ENCODE measurements at regions of chr9 and their contacts with region 1.

Region 1: DNA sequence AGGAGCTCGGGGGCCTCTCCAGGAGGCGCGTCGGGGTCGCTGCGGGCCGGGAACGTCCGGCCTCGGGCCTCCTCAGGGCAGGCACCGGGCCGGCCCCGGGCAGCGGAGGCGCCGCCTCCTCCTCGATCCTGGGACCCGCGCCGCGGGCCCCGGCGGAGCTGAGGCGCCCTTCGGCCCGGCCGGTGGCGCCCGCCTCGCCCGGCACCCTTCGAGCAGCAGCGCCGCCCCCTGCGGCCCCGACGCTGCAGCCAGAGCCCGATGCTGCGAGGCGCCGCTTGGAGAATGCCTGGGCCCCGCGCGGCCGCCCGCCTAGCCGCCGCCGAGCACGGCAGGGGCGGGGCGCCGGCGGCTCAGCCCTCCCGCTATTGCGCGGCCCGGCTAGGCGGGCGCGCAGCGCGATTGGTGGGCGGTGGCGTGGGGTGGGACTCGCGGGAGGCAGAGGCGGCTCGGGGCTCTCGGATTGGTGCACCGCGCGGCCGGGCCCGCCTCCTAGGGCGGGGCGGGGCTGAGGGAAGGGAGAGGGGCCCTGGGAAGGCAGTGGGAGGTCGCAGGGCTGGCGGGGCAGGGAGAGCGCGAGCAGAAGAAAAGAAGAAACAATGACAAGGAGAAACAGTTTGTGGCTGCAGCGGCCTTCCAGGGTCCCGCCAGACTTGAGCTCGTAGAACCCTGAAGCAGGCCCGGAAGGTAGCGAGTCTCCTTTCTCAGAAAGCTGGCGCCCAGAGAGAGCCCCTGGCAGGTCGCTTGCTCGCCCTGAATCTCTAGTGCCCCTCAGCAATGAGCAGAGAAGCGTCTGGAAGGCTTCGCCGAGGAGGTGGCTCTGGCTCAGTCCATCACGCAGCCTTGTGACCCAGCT is at the start of gene EEIG1:
- DNase-seq: peak; percentile 97
- ATAC-seq: peak; percentile 93
- H3K4me3 Mint-ChIP-seq: peak within 1 kb of the TSS; percentile 97
- H3K27ac Mint-ChIP-seq: peak within 1 kb of the TSS; percentile 92
- H3K4me1 Mint-ChIP-seq: peaks cover 45% of the 10 kb centered on the region
- H3K27me3 Mint-ChIP-seq: no peaks in the 10 kb centered on the region
- total RNA-seq, gene EEIG1: 227 to 232 TPM

Region 2: GRCh38 chr9:127955294-127956035 is 25.5 kb before region 1 on chr9:
- CTCF ChIA-PET with region 1: interaction called, 75 read pairs
- POLR2A ChIA-PET with region 1: interaction called, 6 read pairs
- DNase-seq: peak; percentile 83
- ATAC-seq: peak; percentile 96
- H3K4me3 Mint-ChIP-seq: peak overlapping the region; percentile 21
- H3K27ac Mint-ChIP-seq: peak overlapping the region; percentile 70
- H3K4me1 Mint-ChIP-seq: peaks cover 89% of the 10 kb centered on the region
- H3K27me3 Mint-ChIP-seq: no peaks in the 10 kb centered on the region

Region 3: DNA sequence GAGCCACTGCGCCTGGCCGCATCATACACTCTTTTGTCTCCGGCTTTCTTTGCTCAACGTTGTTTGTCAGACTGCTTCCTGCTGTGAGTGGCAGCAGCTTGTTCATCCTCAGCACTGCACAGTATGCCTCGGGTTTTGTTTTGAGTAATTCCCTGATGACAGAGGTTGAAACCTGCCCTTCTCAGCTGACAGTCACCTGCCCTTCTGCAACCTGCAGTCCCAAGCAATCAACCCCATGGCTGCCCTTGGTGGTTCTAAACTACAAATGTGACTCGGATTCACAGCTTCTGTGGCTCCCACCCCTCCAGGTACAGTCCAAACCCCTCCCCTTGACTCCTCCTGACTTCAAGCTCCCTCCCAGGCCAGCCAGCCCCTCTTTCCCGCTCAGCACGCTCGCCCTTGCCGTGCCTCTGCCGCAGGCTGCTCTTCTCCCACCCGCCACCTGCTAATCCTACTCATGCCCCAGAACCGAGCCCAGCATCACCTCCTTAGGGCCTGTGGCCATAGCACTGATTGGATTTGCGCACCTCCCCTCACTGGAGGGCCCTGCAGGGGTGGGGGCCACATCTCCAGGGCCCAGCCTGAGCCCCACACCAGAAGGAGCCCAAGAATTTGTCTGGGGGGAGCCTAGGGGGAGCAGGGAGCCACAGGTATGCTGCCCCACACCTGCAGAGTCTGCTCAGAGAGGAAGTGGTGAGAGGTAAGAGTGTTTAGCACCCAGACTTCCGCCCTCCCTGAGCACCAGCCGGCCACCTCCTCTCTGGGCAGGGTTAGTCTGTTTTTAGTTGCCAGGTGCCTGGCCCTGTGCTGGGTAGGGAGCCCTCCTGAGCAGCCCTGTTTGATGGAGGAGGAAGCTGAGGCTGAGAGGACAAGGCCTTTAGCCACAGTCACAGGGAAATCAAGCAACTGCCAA is 10.3 kb before region 1 on chr9:
- CTCF ChIA-PET with region 1: interaction called, 6 read pairs
- POLR2A ChIA-PET with region 1: interaction called, 25 read pairs
- DNase-seq: peak; percentile 86
- ATAC-seq: peak; percentile 74
- H3K4me3 Mint-ChIP-seq: peak overlapping the region; percentile 97
- H3K27ac Mint-ChIP-seq: peak overlapping the region; percentile 99
- H3K4me1 Mint-ChIP-seq: peaks cover 98% of the 10 kb centered on the region
- H3K27me3 Mint-ChIP-seq: no peaks in the 10 kb centered on the region

Measured in activated CD8-positive, alpha-beta T cell treated with anti-CD3 and anti-CD28 coated beads, Interleukin-2, amount 10 ng/mL, durations not matched to agents 7 days and 5 days (primary cell).